Activated CD4-positive, alpha-beta memory T cell treated with anti-CD3 and anti-CD28 coated beads for 36 hours (primary cell): ENCODE measurements at regions of chr14 and their contacts with region 1.

Region 1: DNA sequence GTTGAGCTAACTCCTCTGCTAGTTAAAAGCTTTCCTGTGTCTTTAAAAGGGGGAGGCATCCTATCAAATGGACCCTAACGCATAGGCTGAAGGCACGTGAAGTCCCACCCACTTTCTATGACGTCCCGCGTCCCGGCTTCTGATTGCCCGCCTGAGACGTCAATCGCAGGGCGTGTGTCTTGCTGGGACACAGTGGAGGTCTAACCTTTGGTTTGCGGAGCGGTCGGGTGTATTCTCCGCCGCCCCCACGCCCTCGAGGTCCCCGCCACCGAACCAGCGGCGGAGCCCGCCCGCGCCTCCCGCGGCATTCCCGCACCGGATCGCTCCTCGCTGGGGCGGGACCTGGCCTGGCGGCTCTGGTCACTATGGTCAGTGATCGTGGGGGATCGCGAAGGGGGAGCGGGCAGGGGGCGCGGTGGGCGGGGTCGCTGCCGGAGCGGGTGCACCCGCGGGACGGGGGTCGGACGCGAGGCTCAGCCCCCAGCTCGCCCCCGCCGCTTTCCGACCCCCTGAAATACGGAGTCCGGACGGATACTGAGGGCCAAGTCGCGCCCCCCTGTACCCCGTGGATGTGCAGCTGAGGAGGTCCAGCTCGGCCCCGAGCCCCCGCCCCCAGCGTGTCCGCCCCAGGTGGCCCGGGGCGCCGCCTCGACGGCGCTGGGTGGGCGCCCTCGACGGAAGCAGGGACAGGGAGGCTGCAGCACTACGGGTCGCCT is at the start of gene OTUB2:
- DNase-seq: peak; percentile 99
- H3K4me3 Mint-ChIP-seq: peak within 1 kb of the TSS; percentile 64
- H3K27ac Mint-ChIP-seq: no peak within 1 kb of the TSS
- H3K4me1 Mint-ChIP-seq: peaks cover 43% of the 10 kb centered on the region
- H3K27me3 Mint-ChIP-seq: no peaks in the 10 kb centered on the region
- total RNA-seq, gene OTUB2: 2.0 to 2.9 TPM

Region 2: DNA sequence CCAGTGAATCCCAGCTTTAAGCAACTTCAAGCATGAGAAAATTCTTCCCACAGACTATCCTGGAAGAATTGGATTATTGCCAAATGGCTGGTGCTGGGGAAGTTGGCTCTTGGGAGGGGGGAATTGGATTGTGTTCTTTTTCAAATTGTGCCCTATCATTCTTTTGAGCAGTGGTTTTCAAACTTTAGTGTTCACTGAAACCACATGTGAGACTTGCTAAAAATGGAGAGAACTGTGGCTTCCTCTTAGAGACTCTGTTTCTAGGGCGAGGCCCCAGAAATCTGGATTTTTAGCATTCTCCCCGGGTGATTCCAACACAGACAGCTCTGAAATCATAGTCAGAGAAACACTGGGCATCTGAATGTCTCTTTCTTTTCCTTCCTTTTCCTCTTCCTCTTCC is 14.5 kb before region 1 on chr14:
- CTCF ChIA-PET with region 1: interaction called, 9 read pairs
- POLR2A ChIA-PET with region 1: interaction called, 3 read pairs
- intact Hi-C with region 1: loop called (anchors 2 kb)
- DNase-seq: peak; percentile 35
- H3K4me3 Mint-ChIP-seq: no peak overlapping the region
- H3K27ac Mint-ChIP-seq: peak overlapping the region; percentile 61
- H3K4me1 Mint-ChIP-seq: peaks cover 43% of the 10 kb centered on the region
- H3K27me3 Mint-ChIP-seq: no peaks in the 10 kb centered on the region

Region 3: GRCh38 chr14:94180655-94181271 is 154.4 kb after region 1 on chr14:
- CTCF ChIA-PET with region 1: interaction called, 3 read pairs
- POLR2A ChIA-PET with region 1: no interaction called
- intact Hi-C with region 1: loop called (anchors 2 kb)
- DNase-seq: no peak
- H3K4me3 Mint-ChIP-seq: peak overlapping the region; percentile 54
- H3K27ac Mint-ChIP-seq: peak overlapping the region; percentile 67
- H3K4me1 Mint-ChIP-seq: peaks cover 50% of the 10 kb centered on the region
- H3K27me3 Mint-ChIP-seq: no peaks in the 10 kb centered on the region

Region 4: GRCh38 chr14:94203473-94204210 is 177.3 kb after region 1 on chr14:
- CTCF ChIA-PET with region 1: no interaction called
- POLR2A ChIA-PET with region 1: no interaction called
- intact Hi-C with region 1: no loop called
- DNase-seq: no peak
- H3K4me3 Mint-ChIP-seq: no peak overlapping the region
- H3K27ac Mint-ChIP-seq: no peak overlapping the region
- H3K4me1 Mint-ChIP-seq: peaks cover 4% of the 10 kb centered on the region
- H3K27me3 Mint-ChIP-seq: no peaks in the 10 kb centered on the region

Region 5: DNA sequence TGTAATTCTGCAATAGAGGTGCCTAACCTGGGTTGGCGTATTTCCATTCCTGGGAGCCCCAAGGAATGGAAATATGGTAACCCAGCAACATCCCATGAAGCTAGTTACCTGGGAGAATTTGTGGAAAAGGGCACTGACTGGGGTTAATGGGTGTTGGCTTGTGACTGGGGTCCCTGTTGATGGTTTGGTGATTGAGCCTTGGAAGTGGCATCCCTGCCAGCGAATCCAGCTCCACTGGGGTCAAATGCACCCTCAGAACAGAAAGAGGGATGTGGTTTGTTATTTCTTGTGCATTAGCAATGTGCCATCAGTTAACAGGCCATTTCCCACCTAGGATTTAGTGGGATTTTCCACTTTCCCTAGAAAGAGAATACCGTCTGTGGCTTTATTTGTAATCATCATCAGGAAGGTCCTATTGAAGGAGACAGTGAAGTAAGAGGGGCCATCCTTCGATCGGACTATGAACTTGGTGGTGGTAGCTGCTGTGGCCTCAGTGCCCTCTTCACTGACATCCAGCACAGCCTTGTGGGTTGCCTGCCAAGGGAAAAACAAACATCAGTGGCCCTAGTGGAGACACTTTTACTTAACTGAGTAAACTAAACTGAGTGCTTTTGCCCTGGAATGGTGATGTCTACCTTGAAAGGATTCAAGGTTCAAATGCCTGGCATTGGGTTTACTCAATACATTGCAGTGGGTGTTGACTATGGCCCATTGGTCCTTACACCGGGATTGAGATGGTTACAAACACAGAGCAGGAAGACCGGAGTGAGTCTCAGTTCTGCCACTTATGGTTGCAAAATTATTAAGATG is 436.6 kb after region 1 on chr14:
- CTCF ChIA-PET with region 1: no interaction called
- POLR2A ChIA-PET with region 1: no interaction called
- intact Hi-C with region 1: no loop called
- DNase-seq: no peak
- H3K4me3 Mint-ChIP-seq: no peak overlapping the region
- H3K27ac Mint-ChIP-seq: no peak overlapping the region
- H3K4me1 Mint-ChIP-seq: no peaks in the 10 kb centered on the region
- H3K27me3 Mint-ChIP-seq: peaks cover 14% of the 10 kb centered on the region